ENCODE measurements at regions of chr3 and their contacts with region 1.

Region 1: GRCh38 chr3:120469447-120469846 is 18.7 kb upstream of the FSTL1 start:
- DNase-seq: peak; percentile 81
- H3K4me3 ChIP-seq: no peak overlapping the region
- H3K27ac ChIP-seq: peak overlapping the region; percentile 51
- H3K4me1 ChIP-seq: peaks cover 35% of the 10 kb centered on the region
- H3K27me3 ChIP-seq: no peaks in the 10 kb centered on the region
- CTCF ChIP-seq: no peak

Region 2: GRCh38 chr3:120425572-120426250 is 43.7 kb before region 1 on chr3:
- CTCF ChIA-PET with region 1: no interaction called
- dilution Hi-C with region 1: loop called (anchors 5 kb)
- in situ Hi-C with region 1: no loop called
- intact Hi-C with region 1: no loop called
- DNase-seq: no peak
- H3K4me3 ChIP-seq: no peak overlapping the region
- H3K27ac ChIP-seq: no peak overlapping the region
- H3K4me1 ChIP-seq: no peaks in the 10 kb centered on the region
- H3K27me3 ChIP-seq: no peaks in the 10 kb centered on the region
- CTCF ChIP-seq: no peak

Region 3: DNA sequence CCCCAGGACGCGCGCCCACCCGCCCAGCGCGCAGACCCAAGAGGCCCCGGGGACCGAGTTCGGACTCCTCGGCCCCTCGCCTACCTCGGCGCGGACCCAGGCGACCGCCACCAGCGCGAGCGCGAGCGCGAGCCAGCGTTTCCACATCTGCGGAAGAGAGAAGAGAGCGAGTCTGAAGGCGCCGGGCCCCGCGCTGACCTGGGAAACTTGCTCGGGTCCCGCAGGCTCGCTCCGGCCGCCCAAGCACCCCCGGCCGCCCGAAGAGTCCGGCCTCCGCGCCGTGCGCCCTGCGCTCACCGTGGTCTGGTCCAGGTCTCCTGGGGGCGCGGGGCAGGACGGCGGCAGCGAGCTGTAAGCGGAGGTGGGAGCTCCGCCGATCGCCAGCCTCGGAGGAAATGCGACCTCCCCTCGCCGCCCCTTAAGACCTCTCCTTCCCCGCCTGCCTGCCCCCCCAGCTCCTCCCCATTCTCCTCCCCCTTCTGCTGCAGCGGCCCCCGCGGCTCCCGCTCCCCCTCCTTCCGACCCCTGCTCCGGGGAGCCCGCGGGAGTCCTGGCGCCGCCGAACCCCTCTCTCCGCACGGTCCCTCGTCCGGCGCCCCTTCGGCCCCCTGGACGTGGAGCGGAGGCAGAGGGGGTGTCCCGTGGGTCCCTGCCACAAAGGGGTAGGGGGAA is 18.7 kb before region 1 on chr3 and contains the start of gene FSTL1:
- CTCF ChIA-PET with region 1: no interaction called
- dilution Hi-C with region 1: no loop called
- in situ Hi-C with region 1: no loop called
- intact Hi-C with region 1: loop called (anchors 1 kb)
- DNase-seq: peak; percentile 45
- H3K4me3 ChIP-seq: peak within 1 kb of the TSS; percentile 81 to 97 (median 81)
- H3K27ac ChIP-seq: peak within 1 kb of the TSS; percentile 63
- H3K4me1 ChIP-seq: peaks cover 19% of the 10 kb centered on the region
- H3K27me3 ChIP-seq: no peaks in the 10 kb centered on the region
- CTCF ChIP-seq: no peak
- total RNA-seq, gene FSTL1: 109 to 161 TPM

Region 4: GRCh38 chr3:120481081-120481480 is 11.6 kb after region 1 on chr3:
- CTCF ChIA-PET with region 1: no interaction called
- dilution Hi-C with region 1: no loop called
- in situ Hi-C with region 1: no loop called
- intact Hi-C with region 1: no loop called
- DNase-seq: no peak
- H3K4me3 ChIP-seq: no peak overlapping the region
- H3K27ac ChIP-seq: no peak overlapping the region
- H3K4me1 ChIP-seq: no peaks in the 10 kb centered on the region
- H3K27me3 ChIP-seq: no peaks in the 10 kb centered on the region
- CTCF ChIP-seq: no peak

Region 5: DNA sequence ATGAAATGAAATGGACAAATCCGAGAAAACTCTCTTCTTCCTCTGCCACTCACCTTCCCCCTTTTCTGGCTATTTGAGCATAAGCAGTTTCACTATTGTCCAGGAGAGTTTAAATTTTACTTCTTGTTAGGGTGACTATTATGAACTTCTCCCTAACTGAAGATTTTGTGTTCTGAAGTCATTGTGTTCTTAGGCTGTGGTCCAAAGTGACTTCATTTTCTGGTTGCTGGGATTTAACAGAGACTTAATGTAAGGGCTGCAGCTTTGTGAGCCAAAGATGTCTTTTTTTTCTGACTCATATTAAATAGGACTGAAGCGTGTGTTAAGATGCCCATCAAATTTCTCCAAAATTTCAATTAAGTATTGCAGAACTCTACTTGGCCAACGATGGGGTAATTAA is 27.9 kb after region 1 on chr3:
- CTCF ChIA-PET with region 1: no interaction called
- dilution Hi-C with region 1: loop called (anchors 5 kb)
- in situ Hi-C with region 1: no loop called
- intact Hi-C with region 1: loop called (anchors 1 kb)
- DNase-seq: peak; percentile 85
- H3K4me3 ChIP-seq: no peak overlapping the region
- H3K27ac ChIP-seq: no peak overlapping the region
- H3K4me1 ChIP-seq: peaks cover 26% of the 10 kb centered on the region
- H3K27me3 ChIP-seq: no peaks in the 10 kb centered on the region
- CTCF ChIP-seq: no peak

Region 6: DNA sequence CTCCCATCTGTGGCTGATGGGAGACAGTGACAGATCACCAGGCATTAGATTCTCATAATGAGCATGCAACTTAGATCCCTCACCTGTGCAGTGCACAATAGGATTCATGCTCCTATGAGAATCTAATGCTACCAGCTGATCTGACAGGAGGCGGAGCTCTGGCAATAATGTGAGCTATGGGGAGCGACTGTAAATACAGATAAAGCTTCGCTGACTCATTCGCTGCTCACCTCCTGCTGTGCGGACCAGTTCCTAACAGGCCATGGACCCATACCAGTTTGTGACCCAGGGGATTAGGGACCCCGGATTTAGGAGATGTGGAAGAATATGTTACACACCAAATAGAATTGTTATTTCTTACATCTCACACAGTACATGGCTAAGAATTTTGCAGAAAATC is 1105.0 kb after region 1 on chr3:
- CTCF ChIA-PET with region 1: no interaction called
- dilution Hi-C with region 1: no loop called
- in situ Hi-C with region 1: no loop called
- intact Hi-C with region 1: no loop called
- DNase-seq: peak; percentile 42
- H3K4me3 ChIP-seq: no peak overlapping the region
- H3K27ac ChIP-seq: no peak overlapping the region
- H3K4me1 ChIP-seq: no peaks in the 10 kb centered on the region
- H3K27me3 ChIP-seq: no peaks in the 10 kb centered on the region
- CTCF ChIP-seq: no peak